Activated CD8-positive, alpha-beta T cell treated with anti-CD3 and anti-CD28 coated beads for 36 hours (primary cell): ENCODE measurements at regions of chr1 and their contacts with region 1.

Region 1: GRCh38 chr1:39816415-39817090 is 27.9 kb upstream of the BMP8B start:
- DNase-seq: peak; percentile 69
- ATAC-seq: peak; percentile 82
- H3K4me3 Mint-ChIP-seq: peak overlapping the region; percentile 39
- H3K27ac Mint-ChIP-seq: no peak overlapping the region
- H3K4me1 Mint-ChIP-seq: peaks cover 14% of the 10 kb centered on the region
- H3K27me3 Mint-ChIP-seq: peaks cover 16% of the 10 kb centered on the region
- CTCF ChIP-seq: peak; percentile 77

Region 2: DNA sequence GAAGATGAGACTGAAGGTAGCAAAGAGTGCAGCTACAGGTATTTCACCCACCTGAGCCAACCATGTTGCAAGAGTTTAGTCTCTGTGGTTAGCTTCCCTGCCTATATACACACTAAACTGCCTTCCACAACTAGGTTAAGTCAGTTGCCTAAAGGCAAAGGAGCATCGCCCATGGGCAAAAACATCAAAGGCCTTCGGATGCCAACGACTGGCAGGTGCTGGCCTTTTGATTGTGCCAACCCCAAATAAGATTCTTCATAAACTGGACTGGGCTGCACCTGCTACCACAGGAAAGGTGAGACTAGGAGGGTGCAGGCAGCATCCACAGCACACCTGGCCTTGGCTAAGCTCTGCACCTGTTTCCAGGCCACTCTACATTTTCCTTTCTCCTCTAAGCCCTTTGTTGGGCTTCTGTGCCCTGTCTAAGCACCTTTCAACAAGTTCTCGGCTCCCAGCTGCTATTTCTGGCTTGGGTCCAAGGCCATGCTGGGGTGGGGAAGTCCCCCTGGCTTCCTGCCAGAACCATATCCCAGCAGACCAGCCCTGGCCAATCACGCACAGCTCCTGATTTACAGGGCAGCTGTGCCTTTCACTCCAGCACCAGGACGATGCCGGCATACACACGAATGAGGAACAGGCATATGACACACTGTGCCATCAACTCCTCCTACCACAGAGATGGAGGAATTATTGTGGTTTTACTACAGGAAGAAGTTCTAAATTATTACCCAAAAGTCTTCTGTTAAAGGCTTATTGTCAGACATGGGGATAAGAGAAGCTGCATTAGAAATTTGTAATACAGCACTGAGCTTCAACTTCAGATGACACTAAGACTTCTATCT is 28.9 kb after region 1 on chr1:
- CTCF ChIA-PET with region 1: interaction called, 10 read pairs
- POLR2A ChIA-PET with region 1: no interaction called
- intact Hi-C with region 1: no loop called
- DNase-seq: peak; percentile 90
- ATAC-seq: peak; percentile 95
- H3K4me3 Mint-ChIP-seq: no peak overlapping the region
- H3K27ac Mint-ChIP-seq: peak overlapping the region; percentile 87
- H3K4me1 Mint-ChIP-seq: peaks cover 55% of the 10 kb centered on the region
- H3K27me3 Mint-ChIP-seq: no peaks in the 10 kb centered on the region
- CTCF ChIP-seq: no peak